SK-N-SH (cell line): ENCODE measurements at regions of chr19 and their contacts with region 1.

Region 1: DNA sequence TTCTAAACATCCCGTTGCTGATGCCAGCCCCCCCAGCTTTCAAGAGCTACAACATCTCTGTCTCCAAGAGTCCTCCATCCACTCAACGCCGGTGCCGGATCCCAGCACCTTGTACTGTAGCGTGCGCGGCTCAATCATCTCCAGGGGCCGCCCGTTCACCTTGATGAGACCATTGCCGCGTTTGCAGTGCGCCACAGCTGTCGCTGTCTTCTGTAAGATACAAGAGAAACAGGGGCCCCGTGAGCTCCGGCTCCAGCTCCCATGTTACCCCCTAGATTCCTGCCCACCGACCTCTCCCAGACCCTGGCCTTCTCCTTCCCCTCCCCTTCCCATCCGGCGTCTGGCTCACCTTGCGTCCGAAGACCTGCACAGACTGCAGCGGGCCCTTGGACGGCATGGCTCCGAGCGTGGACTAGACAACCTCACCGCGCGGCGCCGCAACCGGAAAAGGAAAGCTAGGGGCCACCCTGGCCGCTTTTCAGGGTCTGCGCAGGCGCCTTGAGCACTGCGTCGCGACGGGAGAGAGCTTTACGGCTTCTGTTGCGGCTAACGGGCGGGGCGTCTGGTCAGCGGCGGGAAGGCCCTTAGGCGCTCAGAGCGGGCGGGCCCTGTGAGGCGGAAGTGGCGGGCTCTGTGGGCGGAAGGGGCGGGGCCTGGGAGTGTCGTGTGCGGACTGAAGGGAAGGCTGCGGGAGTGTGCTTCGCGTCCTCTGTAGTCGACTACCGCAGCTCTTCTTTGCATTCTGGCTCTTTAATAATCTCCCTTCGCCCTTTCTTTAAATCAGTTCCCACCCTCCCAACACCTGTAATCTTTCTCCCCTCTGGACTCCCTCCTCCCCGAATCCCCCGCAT is at the start of gene RPS16:
- DNase-seq: peak; percentile 95
- H3K4me3 ChIP-seq: peak within 1 kb of the TSS; percentile 68 to 100
- H3K27ac ChIP-seq: peak within 1 kb of the TSS; percentile 85 to 92
- H3K4me1 ChIP-seq: peaks cover 15 to 17% of the 10 kb centered on the region in 2 experiments; a peak in 2 of 4 replicates
- H3K27me3 ChIP-seq: no peaks in the 10 kb centered on the region
- CTCF ChIP-seq: no peak
- EP300 ChIP-seq: peak in 1 of 2 experiments; percentile 32; a peak in 2 of 4 replicates
- RAD21 ChIP-seq: no peak
- polyA plus RNA-seq, gene RPS16: 5,038 and 7,541 TPM in 2 replicates

Region 2: GRCh38 chr19:39254531-39255345 is 181.0 kb before region 1 on chr19:
- CTCF ChIA-PET with region 1: no interaction called
- POLR2A ChIA-PET with region 1: no interaction called
- DNase-seq: no peak
- H3K4me3 ChIP-seq: no peak overlapping the region
- H3K27ac ChIP-seq: no peak overlapping the region
- H3K4me1 ChIP-seq: peaks cover 0 to 3% of the 10 kb centered on the region in 2 experiments; a peak in 1 of 4 replicates
- H3K27me3 ChIP-seq: peaks cover 4% of the 10 kb centered on the region; the same call in 1 of the 2 replicates
- CTCF ChIP-seq: no peak
- EP300 ChIP-seq: no peak
- RAD21 ChIP-seq: no peak

Region 3: GRCh38 chr19:39372047-39372802 is 63.5 kb before region 1 on chr19:
- CTCF ChIA-PET with region 1: no interaction called
- POLR2A ChIA-PET with region 1: no interaction called
- DNase-seq: no peak
- H3K4me3 ChIP-seq: no peak overlapping the region
- H3K27ac ChIP-seq: peak overlapping the region; percentile 84 to 89
- H3K4me1 ChIP-seq: peaks cover 7 to 15% of the 10 kb centered on the region in 2 experiments; a peak in 2 of 4 replicates
- H3K27me3 ChIP-seq: no peaks in the 10 kb centered on the region
- CTCF ChIP-seq: no peak
- EP300 ChIP-seq: no peak; a peak in 1 of 4 replicates
- RAD21 ChIP-seq: no peak

Region 4: GRCh38 chr19:39390755-39391592 is 44.8 kb before region 1 on chr19 and contains the starts of genes MED29 and PAF1:
- CTCF ChIA-PET with region 1: interaction called, 3 read pairs
- POLR2A ChIA-PET with region 1: interaction called, 18 read pairs
- DNase-seq: peak; percentile 97
- H3K4me3 ChIP-seq: peak within 1 kb of the TSS; percentile 96 to 98
- H3K27ac ChIP-seq: peak within 1 kb of the TSS; percentile 86 to 97
- H3K4me1 ChIP-seq: peaks cover 5 to 17% of the 10 kb centered on the region in 2 experiments; a peak in 2 of 4 replicates
- H3K27me3 ChIP-seq: no peaks in the 10 kb centered on the region
- CTCF ChIP-seq: no peak
- EP300 ChIP-seq: no peak
- RAD21 ChIP-seq: no peak
- polyA plus RNA-seq, gene MED29: 32.0 and 33.1 TPM in 2 replicates
- polyA plus RNA-seq, gene PAF1: 57.6 and 65.3 TPM in 2 replicates

Region 5: DNA sequence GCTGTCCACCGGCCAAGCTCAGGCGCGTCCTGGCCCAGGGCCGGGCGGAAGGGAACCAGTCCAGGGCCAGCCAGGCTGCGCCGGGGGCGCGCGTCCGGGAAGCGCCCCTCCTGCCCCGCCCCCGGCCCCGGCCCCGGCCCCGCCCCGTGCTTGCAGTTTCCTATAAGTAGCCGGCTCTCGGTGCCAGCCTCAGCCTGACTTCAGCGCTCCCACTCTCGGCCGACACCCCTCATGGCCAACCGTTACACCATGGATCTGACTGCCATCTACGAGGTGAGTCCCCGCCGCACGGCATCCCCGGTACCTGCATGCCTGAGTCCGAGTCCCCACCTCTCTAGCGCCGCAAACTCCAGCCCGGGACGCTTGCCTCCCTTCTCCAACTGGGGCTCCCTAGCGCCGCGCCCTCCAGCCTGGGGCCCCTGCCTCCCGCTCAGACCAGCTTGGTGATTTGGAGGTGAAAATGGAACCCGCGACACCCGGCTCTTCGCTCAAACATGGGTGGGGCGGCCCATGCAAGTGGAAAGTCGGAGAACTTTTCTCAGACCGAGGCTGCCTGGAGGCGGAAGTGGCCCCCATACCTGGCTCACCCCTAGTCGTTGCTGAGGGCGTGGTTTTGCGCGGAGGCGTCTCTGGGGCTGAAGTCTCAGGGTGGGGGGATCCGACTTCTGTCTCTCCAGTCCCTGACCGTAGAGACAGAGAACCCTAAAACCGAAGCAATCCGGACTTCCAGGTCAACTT is 28.9 kb before region 1 on chr19 and contains the start of gene ZFP36:
- CTCF ChIA-PET with region 1: interaction called, 18 read pairs
- POLR2A ChIA-PET with region 1: interaction called, 14 read pairs
- DNase-seq: peak; percentile 94
- H3K4me3 ChIP-seq: peak within 1 kb of the TSS; percentile 82 to 98
- H3K27ac ChIP-seq: peak within 1 kb of the TSS; percentile 84 to 91
- H3K4me1 ChIP-seq: peaks cover 41% of the 10 kb centered on the region in 2 experiments; a peak in 3 of 4 replicates
- H3K27me3 ChIP-seq: no peaks in the 10 kb centered on the region
- CTCF ChIP-seq: 0 out of 2 replicates have a peak, but pooled peaks have one; percentile 14
- EP300 ChIP-seq: no peak
- RAD21 ChIP-seq: no peak
- polyA plus RNA-seq, gene ZFP36: 19.7 and 49.3 TPM in 2 replicates

Region 6: DNA sequence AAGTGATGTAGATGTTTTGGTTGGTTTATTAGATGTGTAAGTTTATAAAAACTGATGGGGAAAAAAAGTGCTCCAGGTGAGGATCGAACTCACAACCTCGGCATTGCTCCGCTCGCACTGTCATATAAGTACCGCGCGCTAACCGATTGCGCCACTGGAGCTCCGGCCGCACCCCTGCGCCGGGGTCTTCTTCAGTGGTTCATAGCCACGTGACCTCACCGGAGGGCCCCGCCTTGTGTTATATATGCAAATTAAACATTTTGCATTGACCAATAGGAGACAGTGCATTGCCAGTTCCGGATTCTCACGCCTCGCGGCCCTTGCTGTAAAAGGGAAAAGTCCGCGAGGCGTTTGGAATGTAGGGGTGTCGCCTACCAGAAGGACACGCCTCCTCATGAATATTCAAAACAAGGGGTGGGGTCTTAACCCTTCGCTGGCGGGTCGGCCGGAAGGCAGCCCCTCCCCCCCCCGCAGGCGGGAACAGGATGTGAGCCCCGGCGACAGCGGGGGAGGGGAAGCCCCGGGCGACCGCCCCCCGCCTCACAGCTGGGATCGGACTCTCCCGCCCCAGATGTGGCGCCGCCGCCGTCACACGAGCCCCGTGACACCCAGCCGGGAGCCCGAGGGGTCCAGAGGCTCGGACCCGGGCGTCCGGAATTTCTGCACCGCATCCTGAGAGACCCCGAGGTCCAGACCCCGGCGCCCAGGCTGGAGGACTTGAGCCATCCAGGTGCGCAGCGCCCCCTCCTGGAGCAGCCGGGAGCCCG is 23.4 kb before region 1 on chr19 and contains the start of gene PLEKHG2:
- CTCF ChIA-PET with region 1: interaction called, 18 read pairs
- POLR2A ChIA-PET with region 1: interaction called, 28 read pairs
- DNase-seq: peak; percentile 95
- H3K4me3 ChIP-seq: peak within 1 kb of the TSS; percentile 92 to 96
- H3K27ac ChIP-seq: peak within 1 kb of the TSS; percentile 94 to 96
- H3K4me1 ChIP-seq: peaks cover 29 to 44% of the 10 kb centered on the region in 2 experiments; a peak in 3 of 4 replicates
- H3K27me3 ChIP-seq: no peaks in the 10 kb centered on the region
- CTCF ChIP-seq: peak; percentile 88
- EP300 ChIP-seq: 0 out of 4 replicates have a peak, but pooled peaks of 1 of the 2 experiments have one; percentile 42
- RAD21 ChIP-seq: peak; percentile 27; the same call in 1 of the 2 replicates
- polyA plus RNA-seq, gene PLEKHG2: 13.6 and 13.8 TPM in 2 replicates

Region 7: DNA sequence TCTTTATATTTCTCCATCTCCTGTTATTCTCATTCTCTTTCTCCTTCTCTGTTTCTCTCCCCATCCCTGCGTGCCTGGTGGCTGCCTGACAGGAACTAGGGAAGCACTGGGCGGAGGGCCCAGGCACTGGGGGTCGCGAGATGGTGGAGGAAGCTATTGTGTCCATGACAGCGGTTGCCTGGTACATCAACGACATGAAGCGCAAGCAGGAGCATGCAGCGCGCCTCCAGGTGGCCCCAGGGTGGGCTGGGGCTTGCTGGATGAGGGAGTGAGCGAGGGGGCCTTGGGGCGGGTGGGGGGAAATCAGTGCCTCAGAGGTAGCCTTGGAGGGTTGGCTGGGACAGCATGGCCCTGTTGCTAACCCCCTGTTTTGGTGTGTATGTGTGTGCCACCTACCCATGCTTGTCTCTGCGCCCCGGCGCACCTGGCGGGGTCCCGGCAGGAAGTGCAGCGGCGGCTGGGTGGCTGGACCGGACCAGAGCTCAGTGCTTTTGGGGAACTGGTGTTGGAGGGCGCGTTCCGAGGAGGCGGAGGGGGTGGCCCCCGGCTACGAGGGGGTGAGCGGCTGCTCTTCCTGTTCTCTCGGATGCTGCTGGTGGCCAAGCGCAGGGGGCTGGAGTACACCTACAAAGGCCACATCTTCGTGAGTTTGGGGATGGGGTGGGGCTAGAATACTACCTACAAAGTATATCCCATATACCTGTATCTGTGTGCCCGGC is 18.1 kb before region 1 on chr19:
- CTCF ChIA-PET with region 1: interaction called, 18 read pairs
- POLR2A ChIA-PET with region 1: interaction called, 28 read pairs
- DNase-seq: no peak
- H3K4me3 ChIP-seq: no peak overlapping the region
- H3K27ac ChIP-seq: no peak overlapping the region
- H3K4me1 ChIP-seq: peaks cover 7 to 16% of the 10 kb centered on the region in 2 experiments; a peak in 2 of 4 replicates
- H3K27me3 ChIP-seq: no peaks in the 10 kb centered on the region
- CTCF ChIP-seq: no peak
- EP300 ChIP-seq: no peak
- RAD21 ChIP-seq: no peak

Region 8: DNA sequence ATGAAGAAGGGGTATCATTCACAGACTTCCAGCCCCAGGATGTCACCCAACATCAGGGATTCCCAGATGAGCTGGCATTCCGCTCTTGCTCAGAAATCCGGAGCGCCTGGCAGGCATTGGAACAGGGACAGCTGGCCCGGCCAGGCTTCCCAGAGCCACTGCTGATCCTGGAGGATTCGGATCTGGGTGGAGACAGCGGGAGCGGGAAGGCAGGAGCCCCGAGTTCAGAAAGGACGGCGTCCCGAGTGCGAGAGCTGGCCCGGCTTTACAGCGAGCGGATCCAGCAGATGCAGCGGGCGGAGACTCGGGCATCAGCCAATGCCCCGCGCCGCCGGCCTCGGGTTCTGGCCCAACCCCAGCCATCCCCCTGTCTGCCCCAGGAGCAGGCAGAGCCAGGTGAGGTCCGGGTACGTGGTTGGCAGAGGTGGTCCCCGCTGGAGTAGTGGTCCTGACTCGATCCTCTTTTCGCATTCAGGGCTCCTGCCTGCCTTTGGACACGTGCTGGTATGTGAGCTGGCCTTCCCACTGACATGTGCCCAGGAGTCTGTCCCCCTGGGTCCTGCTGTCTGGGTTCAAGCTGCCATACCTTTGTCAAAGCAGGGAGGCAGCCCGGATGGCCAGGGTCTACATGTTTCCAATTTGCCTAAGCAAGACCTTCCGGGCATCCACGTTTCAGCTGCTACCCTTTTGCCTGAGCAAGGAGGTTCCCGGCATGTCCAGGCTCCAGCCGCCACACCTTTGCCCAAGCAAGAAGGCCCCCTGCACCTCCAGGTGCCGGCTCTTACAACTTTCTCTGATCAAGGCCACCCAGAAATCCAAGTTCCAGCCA is 12.3 kb before region 1 on chr19:
- CTCF ChIA-PET with region 1: interaction called, 3 read pairs
- POLR2A ChIA-PET with region 1: interaction called, 17 read pairs
- DNase-seq: no peak
- H3K4me3 ChIP-seq: no peak overlapping the region
- H3K27ac ChIP-seq: no peak overlapping the region
- H3K4me1 ChIP-seq: peaks cover 3 to 5% of the 10 kb centered on the region in 2 experiments; a peak in 2 of 4 replicates
- H3K27me3 ChIP-seq: no peaks in the 10 kb centered on the region
- CTCF ChIP-seq: no peak
- EP300 ChIP-seq: no peak
- RAD21 ChIP-seq: no peak